ENCODE measurements at regions of chr4 and their contacts with region 1.

Region 1: DNA sequence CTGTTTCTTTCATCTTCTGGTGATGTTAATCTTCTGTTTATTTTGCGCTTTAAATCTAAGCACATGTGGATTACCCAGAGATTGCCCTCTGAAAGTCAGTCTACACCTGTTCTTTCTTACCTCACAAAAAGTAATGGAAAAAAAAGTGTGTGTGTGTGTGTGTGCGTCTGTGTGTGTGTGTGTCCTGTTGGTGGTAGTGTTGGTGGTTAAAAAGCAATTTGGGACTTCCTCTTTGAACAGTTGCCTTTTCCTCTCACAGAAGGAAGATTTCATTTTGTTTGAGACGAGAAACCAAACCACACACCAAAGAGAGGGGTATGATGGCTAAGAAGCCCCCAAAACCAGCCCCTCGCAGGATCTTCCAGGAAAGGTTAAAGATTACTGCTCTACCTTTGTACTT is at the start of gene STAP1:
- DNase-seq: no peak

Region 2: DNA sequence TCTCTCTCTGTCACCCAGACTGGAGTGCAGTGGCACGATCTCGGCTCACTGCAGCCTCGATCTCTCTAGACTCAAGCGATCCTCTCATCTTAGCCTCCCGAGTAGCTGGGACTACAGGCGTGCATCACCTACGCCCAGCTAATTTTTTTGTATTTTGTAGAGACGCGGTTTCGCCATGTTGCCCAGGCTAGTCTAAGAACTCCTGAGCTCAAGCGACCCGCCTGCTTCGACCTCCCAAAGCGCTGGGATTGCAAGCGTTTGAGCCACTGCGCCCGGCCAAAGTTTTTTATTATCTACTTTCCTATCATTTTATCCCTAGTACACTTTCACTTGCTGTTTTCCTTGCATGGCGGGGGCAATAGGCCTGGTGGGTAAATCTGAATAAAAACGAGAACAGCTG is 141.1 kb after region 1 on chr4:
- intact Hi-C with region 1: loop called (anchors 10 kb)
- DNase-seq: no peak

Measured in head of caudate nucleus (tissue), 42 donors.